Kidney (tissue), 22 donors: ENCODE measurements at regions of chr11 and their contacts with region 1.

Region 1: DNA sequence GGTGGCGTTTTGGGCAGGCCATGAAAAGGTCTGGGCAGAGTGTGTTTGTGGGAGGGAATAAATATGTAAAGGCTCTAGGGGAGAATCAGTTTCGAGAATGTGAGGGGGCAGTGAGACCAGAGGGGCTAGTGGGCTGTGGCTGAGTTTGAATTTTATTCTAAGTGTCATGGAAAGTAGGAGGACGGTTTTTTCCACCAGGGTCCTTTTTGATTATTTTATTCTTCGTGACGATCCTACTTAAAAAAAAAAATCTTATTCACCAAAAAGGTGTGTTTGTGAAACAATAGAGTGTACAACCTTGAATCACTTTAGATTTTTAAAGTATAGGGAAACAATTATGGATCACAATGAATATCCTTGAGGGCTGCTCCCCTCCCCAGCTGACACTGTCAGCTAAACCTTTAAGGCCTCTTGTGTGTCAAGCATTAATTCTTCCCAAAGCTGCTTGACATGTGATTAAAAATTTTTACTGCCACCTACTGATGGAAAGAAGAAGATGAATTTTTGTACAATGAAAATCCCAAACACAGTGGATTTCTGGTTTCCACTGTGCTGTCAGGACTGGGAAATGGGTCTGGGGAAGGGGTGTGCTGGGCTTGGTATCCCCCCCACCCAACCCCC is 107.5 kb upstream of the OR4B1 start:
- DNase-seq: peak in 2 of 5 donors; percentile 76 to 81
- H3K4me3 ChIP-seq: no peak overlapping the region
- H3K27ac ChIP-seq: peak overlapping the region; percentile 26 to 70
- H3K4me1 ChIP-seq: peaks cover 2 to 21% (median 11%) of the 10 kb centered on the region in 3 donors
- H3K27me3 ChIP-seq: no peaks in the 10 kb centered on the region
- CTCF ChIP-seq: peak; percentile 52

Region 2: GRCh38 chr11:47932544-47932943 is 176.6 kb before region 1 on chr11:
- intact Hi-C with region 1: loop called (anchors 5 kb)
- DNase-seq: no peak
- H3K4me3 ChIP-seq: no peak overlapping the region
- H3K27ac ChIP-seq: no peak overlapping the region
- H3K4me1 ChIP-seq: no peaks in the 10 kb centered on the region
- H3K27me3 ChIP-seq: no peaks in the 10 kb centered on the region
- CTCF ChIP-seq: no peak